ENCODE measurements at regions of chr1 and their contacts with region 1.

Region 1: GRCh38 chr1:110119837-110120236 is 7.6 kb downstream of the UBL4B start:
- DNase-seq: no peak
- H3K4me3 ChIP-seq: no peak overlapping the region
- H3K27ac ChIP-seq: no peak overlapping the region
- H3K4me1 ChIP-seq: no peaks in the 10 kb centered on the region
- H3K27me3 ChIP-seq: peaks cover 2% of the 10 kb centered on the region
- CTCF ChIP-seq: no peak

Region 2: DNA sequence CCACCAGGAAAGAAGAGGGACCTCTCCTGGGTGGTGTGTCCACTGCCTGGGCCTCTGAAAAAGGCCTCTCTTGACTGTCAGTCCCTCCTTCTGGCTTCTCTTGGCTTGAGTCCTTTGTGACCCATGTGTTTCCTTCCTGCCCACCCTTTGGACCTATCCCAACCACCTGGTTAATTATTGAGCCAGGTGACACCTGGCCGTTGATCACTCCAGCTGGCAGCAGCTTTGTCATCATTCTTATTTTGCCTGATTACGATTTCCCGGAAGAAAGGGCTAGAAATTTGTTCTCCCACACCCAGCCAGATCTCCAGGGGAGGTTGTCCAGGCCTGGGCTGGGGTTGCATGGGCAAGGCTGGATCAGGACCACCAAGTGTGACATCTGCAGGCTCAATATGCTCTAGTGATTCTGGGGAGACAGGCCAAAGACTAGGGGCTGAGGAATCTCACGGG is 184.4 kb before region 1 on chr1:
- CTCF ChIA-PET with region 1: no interaction called
- dilution Hi-C with region 1: no loop called
- in situ Hi-C with region 1: no loop called
- intact Hi-C with region 1: no loop called
- DNase-seq: no peak
- H3K4me3 ChIP-seq: no peak overlapping the region
- H3K27ac ChIP-seq: no peak overlapping the region
- H3K4me1 ChIP-seq: peaks cover 12% of the 10 kb centered on the region
- H3K27me3 ChIP-seq: no peaks in the 10 kb centered on the region
- CTCF ChIP-seq: no peak

Region 3: DNA sequence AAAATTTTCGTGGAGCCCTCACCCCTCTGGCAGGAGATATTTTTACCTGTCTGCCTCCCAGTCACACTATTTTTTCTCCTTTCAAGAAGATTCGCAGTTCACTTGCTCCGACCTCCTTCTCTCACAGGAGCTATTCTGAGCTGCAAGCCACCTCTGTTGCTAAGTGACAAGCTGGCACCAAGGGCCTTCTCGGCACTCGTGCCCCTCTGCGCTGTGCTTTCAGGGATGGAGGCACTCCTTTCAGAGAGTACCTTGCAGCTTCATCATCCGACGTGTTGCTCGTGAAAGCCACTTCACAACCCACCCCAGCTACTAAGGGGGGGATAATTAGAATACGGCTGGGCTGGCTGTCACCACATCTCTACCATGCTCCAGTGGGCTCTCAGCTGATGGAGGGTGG is 42.0 kb after region 1 on chr1:
- CTCF ChIA-PET with region 1: no interaction called
- dilution Hi-C with region 1: loop called (anchors 5 kb)
- in situ Hi-C with region 1: no loop called
- intact Hi-C with region 1: no loop called
- DNase-seq: no peak
- H3K4me3 ChIP-seq: no peak overlapping the region
- H3K27ac ChIP-seq: no peak overlapping the region
- H3K4me1 ChIP-seq: no peaks in the 10 kb centered on the region
- H3K27me3 ChIP-seq: peaks cover 6% of the 10 kb centered on the region
- CTCF ChIP-seq: no peak